Aorta (tissue), 5 donors: ENCODE measurements at regions of chr1 and their contacts with region 1.

Region 1: GRCh38 chr1:214328770-214329469 is 48.0 kb downstream of the SMYD2 start:
- DNase-seq: peak; percentile 76 to 88
- ATAC-seq: peak; percentile 91
- H3K4me3 ChIP-seq: no peak overlapping the region
- H3K27ac ChIP-seq: no peak overlapping the region
- H3K4me1 ChIP-seq: no peaks in the 10 kb centered on the region
- H3K27me3 ChIP-seq: no peaks in the 10 kb centered on the region

Region 2: DNA sequence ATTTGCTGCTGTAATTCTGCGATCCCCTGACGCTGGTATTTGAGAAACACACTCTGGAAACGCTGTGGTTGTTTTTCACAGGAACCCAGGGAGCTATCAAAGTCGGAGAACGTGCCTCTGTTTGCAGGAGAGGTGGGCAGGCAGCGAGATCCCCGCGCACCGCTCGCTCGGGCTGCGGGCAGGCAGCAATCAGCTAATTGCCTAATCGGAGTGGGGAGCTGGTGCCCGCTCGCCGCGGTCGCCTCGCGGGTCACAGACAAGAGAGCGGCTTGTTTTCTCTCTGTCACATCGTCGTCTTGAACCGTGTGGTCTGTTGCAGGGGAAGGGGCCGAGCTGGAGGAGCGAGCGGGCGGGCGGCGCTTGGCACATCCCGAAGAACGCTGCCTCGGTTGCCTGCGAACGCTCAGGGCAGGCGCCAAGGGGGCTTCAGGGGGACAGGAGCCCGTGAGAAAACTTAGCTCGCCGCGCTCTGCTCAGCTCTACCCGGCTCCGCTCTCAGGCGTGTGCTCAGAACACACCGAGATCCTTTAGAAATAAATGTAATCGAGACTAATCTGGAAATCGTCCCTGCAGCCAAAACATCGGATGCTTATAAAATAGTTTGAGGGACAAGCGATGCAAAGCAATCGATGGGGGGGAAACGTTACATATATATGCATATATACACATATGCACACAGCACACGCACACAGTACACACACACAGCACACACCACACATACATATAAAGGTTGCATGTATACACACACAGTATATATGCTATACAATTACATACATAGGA is 141.6 kb before region 1 on chr1:
- intact Hi-C with region 1: no loop called
- DNase-seq: peak in 1 of 2 donors; percentile 67
- ATAC-seq: no peak
- H3K4me3 ChIP-seq: no peak overlapping the region
- H3K27ac ChIP-seq: no peak overlapping the region
- H3K4me1 ChIP-seq: no peaks in the 10 kb centered on the region
- H3K27me3 ChIP-seq: peaks cover 0 to 1% of the 10 kb centered on the region in 2 donors

Region 3: GRCh38 chr1:214216774-214217173 is 112.1 kb before region 1 on chr1:
- intact Hi-C with region 1: loop called (anchors 2 to 5 kb)
- DNase-seq: no peak
- ATAC-seq: no peak
- H3K4me3 ChIP-seq: no peak overlapping the region
- H3K27ac ChIP-seq: no peak overlapping the region
- H3K4me1 ChIP-seq: no peaks in the 10 kb centered on the region
- H3K27me3 ChIP-seq: peaks cover 0 to 1% of the 10 kb centered on the region in 2 donors

Region 4: DNA sequence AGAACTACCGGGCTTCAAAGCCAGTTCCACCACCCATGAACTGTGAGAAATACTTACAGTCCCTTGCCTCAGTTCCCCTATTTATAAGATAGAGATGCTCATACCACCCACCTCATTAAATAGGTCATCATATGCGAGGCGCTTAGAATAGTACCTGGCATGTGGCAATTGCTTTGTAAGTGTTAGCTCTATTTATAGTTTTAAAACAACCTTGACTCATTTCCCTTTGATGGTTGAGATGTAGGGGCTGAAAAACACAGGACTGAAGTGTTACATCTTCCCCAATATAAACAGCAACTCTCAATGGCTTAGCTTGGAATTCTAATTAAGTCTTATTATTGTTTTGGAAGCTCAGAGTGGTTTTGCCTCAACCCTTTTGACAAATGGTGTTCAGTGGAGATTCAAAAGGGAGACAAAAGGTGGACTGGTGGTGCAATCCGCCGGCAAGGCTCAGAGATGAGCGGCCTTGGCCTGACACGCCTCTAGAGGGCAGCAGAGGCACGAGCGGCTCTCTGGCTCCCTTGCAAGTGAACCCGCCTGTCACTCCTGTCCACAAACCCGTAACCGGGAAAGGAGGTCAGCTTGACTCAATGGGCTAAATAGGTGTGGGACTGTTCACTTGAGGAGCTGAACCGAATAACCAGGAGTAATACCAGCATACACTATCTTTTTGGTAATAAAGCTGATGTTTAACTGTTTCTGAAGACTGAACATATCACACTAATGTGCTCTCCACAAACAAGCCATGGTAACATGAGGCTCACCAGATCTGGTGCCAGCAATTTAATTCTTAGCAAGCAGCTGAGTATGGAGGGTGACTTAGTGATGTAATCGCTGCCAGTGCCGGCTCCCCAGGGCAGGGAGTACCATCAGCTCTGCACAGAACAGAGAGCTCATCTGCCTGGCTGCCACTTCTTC is 67.5 kb before region 1 on chr1:
- intact Hi-C with region 1: loop called (anchors 1 to 2 kb)
- DNase-seq: peak; percentile 85 to 94
- ATAC-seq: peak; percentile 94
- H3K4me3 ChIP-seq: no peak overlapping the region
- H3K27ac ChIP-seq: no peak overlapping the region
- H3K4me1 ChIP-seq: no peaks in the 10 kb centered on the region
- H3K27me3 ChIP-seq: peaks cover 0 to 3% of the 10 kb centered on the region in 2 donors

Region 5: DNA sequence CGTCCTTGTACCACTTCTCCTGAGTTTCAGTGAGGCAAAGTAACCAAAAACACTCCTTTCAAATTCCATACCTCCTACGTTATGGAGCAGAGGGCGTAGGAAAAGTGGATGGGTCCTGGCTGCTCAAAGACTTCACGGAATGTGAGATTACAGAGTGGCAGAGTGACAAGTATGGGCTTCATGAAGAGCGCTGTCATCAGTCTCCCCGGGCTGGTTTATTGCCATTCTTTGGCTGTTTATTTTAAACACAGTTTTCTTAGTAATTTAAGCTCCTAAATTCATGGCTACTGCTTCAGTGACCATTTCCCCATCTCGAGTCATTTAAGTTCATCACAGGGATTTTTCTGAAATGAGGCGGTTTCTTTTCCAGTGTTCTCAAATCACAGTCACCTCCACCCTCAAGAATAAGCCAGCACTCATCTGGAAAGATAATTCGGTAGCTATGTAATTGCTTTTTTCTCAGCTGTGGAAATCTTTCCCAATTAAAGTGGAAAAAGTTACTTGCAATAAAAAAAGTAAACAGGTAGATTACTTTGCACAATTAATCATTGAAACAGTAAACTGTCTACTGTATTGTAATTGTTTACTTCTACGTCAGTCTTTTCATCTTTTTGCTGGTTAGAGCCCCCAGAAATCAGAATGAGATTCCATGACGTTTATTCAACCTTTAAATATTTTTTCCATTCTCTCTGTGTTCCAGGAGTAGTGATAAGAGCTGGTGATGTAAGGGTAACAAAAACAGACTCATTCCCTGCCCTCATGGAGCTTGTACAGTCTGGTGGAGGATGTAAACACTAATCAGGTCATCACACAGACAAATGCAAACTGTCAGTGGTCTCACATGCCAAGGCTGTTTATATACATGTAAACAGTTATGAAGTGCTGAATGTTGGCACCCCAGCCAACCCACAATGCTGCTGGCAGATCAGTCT is 51.0 kb before region 1 on chr1:
- intact Hi-C with region 1: loop called in 1 of 2 experiments (anchors 5 kb)
- DNase-seq: no peak
- ATAC-seq: no peak
- H3K4me3 ChIP-seq: peak overlapping the region in 1 of 2 donors; percentile 4
- H3K27ac ChIP-seq: no peak overlapping the region
- H3K4me1 ChIP-seq: peaks cover 0 to 2% of the 10 kb centered on the region in 2 donors
- H3K27me3 ChIP-seq: no peaks in the 10 kb centered on the region

Region 6: DNA sequence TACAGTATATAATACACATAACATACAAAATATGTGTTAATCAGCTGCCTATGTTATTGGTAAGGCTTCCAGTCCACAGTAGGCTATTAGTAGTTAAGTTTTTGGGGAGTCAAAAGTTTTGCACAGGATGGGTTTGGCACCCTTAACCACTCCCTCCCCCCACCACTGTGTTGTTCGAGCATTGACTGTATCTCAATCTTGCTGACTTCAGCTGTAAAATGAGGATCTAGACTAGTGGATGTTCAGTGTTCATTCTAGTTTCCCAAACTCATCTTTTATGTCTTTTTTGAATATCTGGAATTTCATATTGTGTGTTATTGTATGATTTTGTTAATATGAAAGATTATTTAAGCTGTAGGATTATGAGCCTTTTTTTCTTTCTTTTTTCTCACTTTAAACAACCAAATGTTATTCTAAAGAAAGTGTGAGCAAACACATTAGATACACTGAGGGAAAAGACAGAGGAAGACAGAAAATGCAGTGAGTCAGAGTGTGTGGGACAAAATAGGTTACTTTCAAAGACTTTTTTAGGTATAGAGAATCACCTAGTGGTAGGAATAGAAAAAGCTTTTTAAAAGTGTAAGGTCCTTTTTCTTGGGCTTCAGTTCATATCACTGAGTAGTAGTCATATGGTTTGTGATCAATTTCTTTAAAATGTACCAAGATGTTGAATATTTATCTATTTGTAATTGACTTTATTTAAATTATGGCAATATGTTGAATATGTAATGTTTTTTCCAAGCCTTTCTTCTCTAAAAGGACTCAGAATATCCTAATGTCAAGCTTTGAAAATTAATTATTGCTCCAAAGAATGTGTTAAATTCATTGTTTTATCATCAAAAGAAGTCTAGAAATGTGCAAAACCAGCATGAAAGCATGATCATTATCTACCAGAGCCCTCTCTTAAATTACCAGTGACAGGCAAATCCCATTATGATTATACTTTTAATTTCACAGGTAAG is 256.2 kb after region 1 on chr1:
- intact Hi-C with region 1: loop called (anchors 2 kb)
- DNase-seq: no peak
- ATAC-seq: peak; percentile 65
- H3K4me3 ChIP-seq: no peak overlapping the region
- H3K27ac ChIP-seq: no peak overlapping the region
- H3K4me1 ChIP-seq: no peaks in the 10 kb centered on the region
- H3K27me3 ChIP-seq: no peaks in the 10 kb centered on the region